CD8-positive, alpha-beta memory T cell (primary cell): ENCODE measurements at regions of chr2 and their contacts with region 1.

Region 1: DNA sequence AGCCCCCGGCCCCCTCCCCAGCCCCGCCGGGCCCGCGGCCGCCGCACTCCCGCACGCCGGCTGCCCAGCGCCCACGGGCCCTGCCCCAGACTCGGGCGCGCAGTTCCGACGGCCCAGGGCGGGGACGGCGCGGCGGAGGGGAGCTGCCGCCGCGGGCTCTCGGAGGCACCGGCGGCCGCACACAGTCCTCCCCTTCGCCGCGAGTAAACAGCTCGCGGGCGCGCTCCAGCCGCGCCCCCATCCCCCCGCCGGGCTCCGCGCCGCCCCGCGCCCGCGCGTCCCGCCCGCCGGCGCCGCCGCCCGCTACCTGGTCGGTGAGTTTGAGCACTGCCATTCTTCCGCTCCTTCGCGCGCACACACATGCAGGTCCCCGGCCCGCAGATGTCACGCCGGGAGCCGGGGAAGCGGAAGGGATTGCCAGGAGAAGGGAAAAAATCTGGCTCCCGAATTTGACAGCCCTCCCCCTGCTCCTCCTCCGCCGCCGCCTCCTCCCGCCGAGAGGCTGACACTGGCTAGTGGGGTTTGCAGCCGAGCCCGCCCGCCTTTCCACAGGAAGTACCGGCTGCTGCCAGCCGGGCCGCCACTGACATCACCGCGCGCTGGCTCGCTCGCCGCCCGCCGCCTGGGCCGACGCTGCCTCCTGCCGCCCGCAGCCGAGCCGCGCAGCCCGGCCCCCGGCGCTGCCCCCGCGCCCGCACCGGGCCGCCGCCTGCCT is at the start of gene ANKRD44:
- DNase-seq: peak; percentile 85 to 95 (median 92)
- H3K4me3 ChIP-seq: peak within 1 kb of the TSS; percentile 85
- H3K4me3 Mint-ChIP-seq: peak within 1 kb of the TSS; percentile 89 to 98 (median 96)
- H3K27ac ChIP-seq: peak within 1 kb of the TSS; percentile 79
- H3K27ac Mint-ChIP-seq: peak within 1 kb of the TSS; percentile 95 to 99 (median 96)
- H3K4me1 ChIP-seq: peaks cover 51% of the 10 kb centered on the region
- H3K4me1 Mint-ChIP-seq: peaks cover 57 to 74% (median 68%) of the 10 kb centered on the region in 3 donors
- H3K27me3 ChIP-seq: no peaks in the 10 kb centered on the region
- H3K27me3 Mint-ChIP-seq: no peaks in the 10 kb centered on the region
- total RNA-seq, gene ANKRD44: 142 to 150 TPM

Region 2: GRCh38 chr2:197113275-197113711 is 197.1 kb before region 1 on chr2:
- CTCF ChIA-PET with region 1: interaction called, 24 read pairs
- POLR2A ChIA-PET with region 1: interaction called, 11 read pairs
- DNase-seq: peak in 2 of 5 donors; percentile 29 to 38
- H3K4me3 ChIP-seq: no peak overlapping the region
- H3K4me3 Mint-ChIP-seq: no peak overlapping the region
- H3K27ac ChIP-seq: no peak overlapping the region
- H3K27ac Mint-ChIP-seq: peak overlapping the region in 7 of 8 donors; percentile 14 to 82 (median 75)
- H3K4me1 ChIP-seq: peaks cover 19% of the 10 kb centered on the region
- H3K4me1 Mint-ChIP-seq: peaks cover 26 to 43% (median 39%) of the 10 kb centered on the region in 3 donors
- H3K27me3 ChIP-seq: no peaks in the 10 kb centered on the region
- H3K27me3 Mint-ChIP-seq: no peaks in the 10 kb centered on the region

Region 3: GRCh38 chr2:197198890-197199289 is 111.5 kb before region 1 on chr2:
- CTCF ChIA-PET with region 1: interaction called, 80 read pairs
- POLR2A ChIA-PET with region 1: interaction called, 68 read pairs
- DNase-seq: peak; percentile 77 to 97 (median 96)
- H3K4me3 ChIP-seq: peak overlapping the region; percentile 35
- H3K4me3 Mint-ChIP-seq: peak overlapping the region; percentile 88 to 94 (median 93)
- H3K27ac ChIP-seq: peak overlapping the region; percentile 52
- H3K27ac Mint-ChIP-seq: peak overlapping the region; percentile 88 to 99 (median 97)
- H3K4me1 ChIP-seq: peaks cover 91% of the 10 kb centered on the region
- H3K4me1 Mint-ChIP-seq: peaks cover 92 to 97% (median 96%) of the 10 kb centered on the region in 3 donors
- H3K27me3 ChIP-seq: no peaks in the 10 kb centered on the region
- H3K27me3 Mint-ChIP-seq: no peaks in the 10 kb centered on the region

Region 4: GRCh38 chr2:197239434-197239833 is 71.0 kb before region 1 on chr2:
- CTCF ChIA-PET with region 1: interaction called, 13 read pairs
- POLR2A ChIA-PET with region 1: interaction called, 12 read pairs
- DNase-seq: peak in 1 of 5 donors; percentile 22
- H3K4me3 ChIP-seq: peak overlapping the region; percentile 45
- H3K4me3 Mint-ChIP-seq: peak overlapping the region; percentile 76 to 92 (median 87)
- H3K27ac ChIP-seq: peak overlapping the region; percentile 20
- H3K27ac Mint-ChIP-seq: peak overlapping the region; percentile 74 to 99 (median 94)
- H3K4me1 ChIP-seq: peaks cover 97% of the 10 kb centered on the region
- H3K4me1 Mint-ChIP-seq: peaks cover 85 to 98% (median 92%) of the 10 kb centered on the region in 3 donors
- H3K27me3 ChIP-seq: no peaks in the 10 kb centered on the region
- H3K27me3 Mint-ChIP-seq: no peaks in the 10 kb centered on the region

Region 5: GRCh38 chr2:197263077-197263476 is 47.4 kb before region 1 on chr2:
- CTCF ChIA-PET with region 1: interaction called, 5 read pairs
- POLR2A ChIA-PET with region 1: interaction called, 10 read pairs
- DNase-seq: no peak
- H3K4me3 ChIP-seq: no peak overlapping the region
- H3K4me3 Mint-ChIP-seq: peak overlapping the region; percentile 6 to 82 (median 69)
- H3K27ac ChIP-seq: no peak overlapping the region
- H3K27ac Mint-ChIP-seq: peak overlapping the region; percentile 84 to 97 (median 92)
- H3K4me1 ChIP-seq: peaks cover 84% of the 10 kb centered on the region
- H3K4me1 Mint-ChIP-seq: peaks cover 84 to 92% (median 88%) of the 10 kb centered on the region in 3 donors
- H3K27me3 ChIP-seq: no peaks in the 10 kb centered on the region
- H3K27me3 Mint-ChIP-seq: no peaks in the 10 kb centered on the region

Region 6: GRCh38 chr2:197327472-197328098 is 17.2 kb after region 1 on chr2:
- CTCF ChIA-PET with region 1: interaction called, 25 read pairs
- POLR2A ChIA-PET with region 1: interaction called, 7 read pairs
- DNase-seq: no peak
- H3K4me3 ChIP-seq: no peak overlapping the region
- H3K4me3 Mint-ChIP-seq: peak overlapping the region in 6 of 7 donors; percentile 22 to 76 (median 59)
- H3K27ac ChIP-seq: no peak overlapping the region
- H3K27ac Mint-ChIP-seq: peak overlapping the region; percentile 24 to 89 (median 79)
- H3K4me1 ChIP-seq: peaks cover 55% of the 10 kb centered on the region
- H3K4me1 Mint-ChIP-seq: peaks cover 44 to 60% (median 60%) of the 10 kb centered on the region in 3 donors
- H3K27me3 ChIP-seq: no peaks in the 10 kb centered on the region
- H3K27me3 Mint-ChIP-seq: no peaks in the 10 kb centered on the region

Region 7: DNA sequence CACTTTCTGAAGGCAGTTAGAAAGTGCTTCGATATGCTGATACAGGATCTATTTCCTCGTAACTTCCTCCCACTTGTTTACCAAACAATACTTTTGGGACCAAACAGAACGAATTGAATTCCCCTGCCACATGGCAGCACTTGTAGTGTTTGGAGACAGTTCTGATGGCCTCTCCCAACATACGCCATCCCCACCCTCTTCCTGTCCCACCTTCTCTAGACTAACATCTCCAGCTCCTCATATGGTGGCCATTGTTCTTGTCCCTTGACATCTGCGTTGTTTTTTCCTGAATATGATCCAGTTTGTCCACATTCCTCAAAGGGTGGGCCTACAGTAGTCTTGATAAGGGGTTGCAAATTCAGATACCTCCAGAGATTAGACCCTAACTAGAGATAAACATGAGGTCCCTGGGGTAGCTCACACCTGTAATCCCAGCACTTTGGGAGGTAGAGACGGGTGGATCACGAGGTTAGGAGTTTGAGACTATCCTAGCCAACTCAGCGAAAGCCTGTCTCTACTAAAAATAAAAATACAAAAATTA is 53.6 kb after region 1 on chr2:
- CTCF ChIA-PET with region 1: no interaction called
- POLR2A ChIA-PET with region 1: no interaction called
- DNase-seq: no peak
- H3K4me3 ChIP-seq: no peak overlapping the region
- H3K4me3 Mint-ChIP-seq: no peak overlapping the region
- H3K27ac ChIP-seq: no peak overlapping the region
- H3K27ac Mint-ChIP-seq: no peak overlapping the region
- H3K4me1 ChIP-seq: peaks cover 3% of the 10 kb centered on the region
- H3K4me1 Mint-ChIP-seq: peaks cover 7 to 11% (median 9%) of the 10 kb centered on the region in 3 donors
- H3K27me3 ChIP-seq: no peaks in the 10 kb centered on the region
- H3K27me3 Mint-ChIP-seq: peaks cover 0 to 1% of the 10 kb centered on the region in 2 donors

Region 8: DNA sequence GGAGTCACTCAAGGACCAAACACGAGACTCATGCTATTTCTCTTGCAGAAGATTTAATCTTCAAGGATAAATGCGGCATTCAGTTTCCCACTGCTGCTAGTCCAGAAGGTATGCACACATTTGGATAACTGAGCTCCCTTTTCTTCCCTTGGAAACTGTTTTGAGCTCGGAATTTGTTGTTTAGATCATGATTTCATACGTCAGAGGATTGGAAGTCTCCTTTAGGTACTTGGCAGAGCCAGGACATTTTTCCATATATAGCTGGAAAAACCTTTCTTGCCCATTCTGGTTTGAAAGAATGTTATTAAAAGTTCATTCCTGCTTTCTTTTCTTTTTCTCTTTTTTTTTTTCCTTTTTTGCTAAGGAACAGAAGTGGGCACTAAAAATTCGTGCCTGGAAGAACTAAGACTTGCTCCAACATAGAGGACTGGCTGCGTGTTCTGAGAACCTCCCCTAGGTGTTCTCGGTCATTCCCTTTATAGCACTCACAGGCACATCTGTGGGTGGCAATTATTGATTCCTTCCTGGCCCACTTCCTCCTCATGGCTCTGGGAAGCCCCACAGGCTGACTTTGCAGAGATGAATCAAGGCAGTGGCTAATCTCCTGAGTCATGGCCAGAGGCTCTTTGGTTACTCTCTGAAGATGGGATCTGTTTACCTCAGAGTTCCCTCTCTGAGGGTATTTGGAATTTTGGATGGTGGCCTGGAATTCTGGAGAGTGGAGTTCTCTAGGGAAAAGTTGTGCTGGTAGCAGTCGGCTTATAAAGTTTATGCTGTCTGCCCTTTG is 598.8 kb after region 1 on chr2:
- CTCF ChIA-PET with region 1: no interaction called
- POLR2A ChIA-PET with region 1: no interaction called
- DNase-seq: no peak
- H3K4me3 ChIP-seq: no peak overlapping the region
- H3K4me3 Mint-ChIP-seq: no peak overlapping the region
- H3K27ac ChIP-seq: no peak overlapping the region
- H3K27ac Mint-ChIP-seq: no peak overlapping the region
- H3K4me1 ChIP-seq: peaks cover 4% of the 10 kb centered on the region
- H3K4me1 Mint-ChIP-seq: peaks cover 7 to 12% (median 8%) of the 10 kb centered on the region in 3 donors
- H3K27me3 ChIP-seq: no peaks in the 10 kb centered on the region
- H3K27me3 Mint-ChIP-seq: peaks cover 4 to 23% of the 10 kb centered on the region in 2 donors